OCI-LY7 (cell line): ENCODE measurements at regions of chr1 and their contacts with region 1.

Region 1: DNA sequence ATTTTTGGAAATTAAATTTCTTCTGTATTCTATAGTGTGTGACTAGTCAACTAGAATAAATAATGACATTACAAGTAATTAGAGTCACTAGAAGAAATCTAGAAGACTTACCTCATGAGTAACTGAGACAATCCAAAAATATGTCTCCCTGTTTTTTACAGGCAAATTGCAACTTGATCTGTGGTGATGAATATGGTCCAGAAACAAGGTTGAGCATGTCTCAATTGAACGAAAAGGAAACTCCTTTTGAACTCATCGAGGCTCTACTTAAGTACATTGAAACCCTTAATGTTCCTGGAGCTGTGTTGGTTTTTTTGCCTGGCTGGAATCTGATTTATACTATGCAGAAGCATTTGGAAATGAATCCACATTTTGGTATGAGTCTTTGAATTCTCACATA is 36.7 kb downstream of the DHX9 start:
- DNase-seq: no peak
- H3K4me3 ChIP-seq: no peak overlapping the region
- H3K27ac ChIP-seq: no peak overlapping the region
- H3K4me1 ChIP-seq: no peaks in the 10 kb centered on the region
- CTCF ChIP-seq: no peak

Region 2: GRCh38 chr1:182330303-182330702 is 545.6 kb before region 1 on chr1:
- CTCF ChIA-PET with region 1: no interaction called
- POLR2A ChIA-PET with region 1: no interaction called
- intact Hi-C with region 1: no loop called
- DNase-seq: no peak
- H3K4me3 ChIP-seq: no peak overlapping the region
- H3K27ac ChIP-seq: no peak overlapping the region
- H3K4me1 ChIP-seq: no peaks in the 10 kb centered on the region
- CTCF ChIP-seq: no peak

Region 3: GRCh38 chr1:182861994-182862393 is 13.9 kb before region 1 on chr1:
- CTCF ChIA-PET with region 1: no interaction called
- POLR2A ChIA-PET with region 1: interaction called, 3 read pairs
- intact Hi-C with region 1: loop called (anchors 2 kb)
- DNase-seq: no peak
- H3K4me3 ChIP-seq: no peak overlapping the region
- H3K27ac ChIP-seq: no peak overlapping the region
- H3K4me1 ChIP-seq: no peaks in the 10 kb centered on the region
- CTCF ChIP-seq: no peak